Aorta (tissue), 5 donors: ENCODE measurements at regions of chr16 and their contacts with region 1.

Region 1: GRCh38 chr16:75043175-75043895 is 44.5 kb downstream of the ZNRF1 start:
- DNase-seq: no peak
- ATAC-seq: peak; percentile 62
- H3K4me3 ChIP-seq: no peak overlapping the region
- H3K27ac ChIP-seq: peak overlapping the region; percentile 57 to 60
- H3K4me1 ChIP-seq: peaks cover 4 to 8% of the 10 kb centered on the region in 2 donors
- H3K27me3 ChIP-seq: no peaks in the 10 kb centered on the region

Region 2: GRCh38 chr16:74998481-74999218 is 44.7 kb before region 1 on chr16 and contains the start of gene ZNRF1:
- intact Hi-C with region 1: loop called in 1 of 2 experiments (anchors 5 kb)
- DNase-seq: peak; percentile 88 to 94
- ATAC-seq: peak; percentile 94
- H3K4me3 ChIP-seq: peak within 1 kb of the TSS; percentile 78 to 95
- H3K27ac ChIP-seq: peak within 1 kb of the TSS in 1 of 2 donors; percentile 12
- H3K4me1 ChIP-seq: no peaks in the 10 kb centered on the region
- H3K27me3 ChIP-seq: no peaks in the 10 kb centered on the region
- total RNA-seq, gene ZNRF1: 20.8 to 26.3 TPM

Region 3: DNA sequence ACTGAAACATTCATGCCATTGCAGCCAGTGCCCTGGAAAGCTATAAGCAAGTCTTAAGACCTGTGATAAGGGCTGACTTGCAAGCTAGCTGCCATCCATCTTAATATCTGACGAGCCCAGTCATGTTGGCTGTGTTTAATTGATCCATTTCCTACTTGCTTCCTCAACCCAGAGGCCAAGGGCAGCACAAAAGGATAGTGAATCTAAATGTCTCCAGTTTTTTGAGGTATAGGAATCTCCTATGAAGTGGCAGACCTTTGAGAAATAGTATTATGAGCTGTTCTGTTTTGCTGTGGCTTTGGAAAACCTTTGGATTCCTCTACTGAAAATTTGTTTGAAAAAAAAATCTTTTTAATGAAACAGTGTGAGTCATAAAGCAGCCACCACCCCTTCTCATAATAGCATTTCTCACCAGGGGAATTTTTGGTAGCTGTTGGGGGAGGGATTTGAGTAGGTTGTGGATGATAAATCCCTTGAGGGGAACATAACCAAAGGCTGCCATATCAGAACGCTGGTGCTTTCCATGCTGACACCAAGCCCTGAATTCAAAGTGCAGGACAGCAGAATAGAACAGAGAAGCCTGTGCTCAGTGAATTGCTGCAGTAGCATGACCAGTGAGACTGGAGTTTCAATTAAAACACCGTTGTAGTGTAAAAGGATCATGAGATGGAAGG is 31.6 kb before region 1 on chr16:
- intact Hi-C with region 1: loop called in 1 of 2 experiments (anchors 1 kb)
- DNase-seq: no peak
- ATAC-seq: peak; percentile 89
- H3K4me3 ChIP-seq: no peak overlapping the region
- H3K27ac ChIP-seq: peak overlapping the region; percentile 83 to 94
- H3K4me1 ChIP-seq: peaks cover 0 to 1% of the 10 kb centered on the region in 2 donors
- H3K27me3 ChIP-seq: no peaks in the 10 kb centered on the region

Region 4: DNA sequence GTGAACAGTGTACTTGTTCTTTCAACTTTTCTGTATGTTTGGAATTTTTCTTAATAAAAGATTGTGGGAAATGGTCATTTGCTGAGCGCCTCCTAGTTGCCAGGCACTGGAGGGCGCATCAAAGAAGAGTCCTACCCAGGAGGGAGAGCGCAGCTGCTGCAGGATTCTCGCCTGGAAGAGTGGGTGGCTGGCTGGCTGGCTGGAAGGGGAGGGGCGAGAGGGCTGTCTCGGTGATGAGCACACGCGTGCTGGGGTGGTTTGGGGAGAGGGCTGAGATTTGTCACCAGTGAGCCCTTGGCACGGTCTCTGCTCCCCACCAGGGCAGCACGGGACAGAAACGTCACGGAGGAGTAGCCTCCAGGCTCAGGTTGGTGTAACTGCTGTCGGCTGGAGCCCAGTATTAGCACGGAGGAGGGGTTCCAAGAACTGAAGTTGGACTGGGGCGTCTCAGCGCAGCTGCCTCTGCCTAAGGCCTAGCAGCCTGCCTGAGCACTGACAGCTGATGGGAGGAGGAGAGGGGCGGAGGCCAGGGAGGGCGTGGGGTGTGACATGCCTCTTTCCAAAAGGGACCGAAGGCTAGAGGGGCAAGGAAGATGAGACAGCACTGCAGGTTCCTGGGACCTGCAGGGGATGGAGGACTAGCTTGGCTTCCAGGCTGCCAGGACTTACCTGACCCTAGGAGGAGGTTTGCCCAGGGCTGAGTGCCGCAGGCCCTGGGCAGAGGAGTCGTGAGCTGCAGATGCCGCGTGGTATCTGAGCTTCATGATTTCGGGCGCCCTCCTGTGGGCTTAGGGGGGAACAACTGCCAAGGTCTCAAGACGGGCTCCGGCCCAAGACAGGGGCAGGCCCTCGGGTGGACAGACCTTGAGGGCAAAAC is 67.5 kb after region 1 on chr16:
- intact Hi-C with region 1: loop called (anchors 5 to 10 kb)
- DNase-seq: peak; percentile 93 to 96
- ATAC-seq: peak; percentile 91
- H3K4me3 ChIP-seq: no peak overlapping the region
- H3K27ac ChIP-seq: peak overlapping the region in 1 of 2 donors; percentile 15
- H3K4me1 ChIP-seq: peaks cover 0 to 3% of the 10 kb centered on the region in 2 donors
- H3K27me3 ChIP-seq: no peaks in the 10 kb centered on the region